ENCODE measurements at regions of chr11 and their contacts with region 1.

Region 1: DNA sequence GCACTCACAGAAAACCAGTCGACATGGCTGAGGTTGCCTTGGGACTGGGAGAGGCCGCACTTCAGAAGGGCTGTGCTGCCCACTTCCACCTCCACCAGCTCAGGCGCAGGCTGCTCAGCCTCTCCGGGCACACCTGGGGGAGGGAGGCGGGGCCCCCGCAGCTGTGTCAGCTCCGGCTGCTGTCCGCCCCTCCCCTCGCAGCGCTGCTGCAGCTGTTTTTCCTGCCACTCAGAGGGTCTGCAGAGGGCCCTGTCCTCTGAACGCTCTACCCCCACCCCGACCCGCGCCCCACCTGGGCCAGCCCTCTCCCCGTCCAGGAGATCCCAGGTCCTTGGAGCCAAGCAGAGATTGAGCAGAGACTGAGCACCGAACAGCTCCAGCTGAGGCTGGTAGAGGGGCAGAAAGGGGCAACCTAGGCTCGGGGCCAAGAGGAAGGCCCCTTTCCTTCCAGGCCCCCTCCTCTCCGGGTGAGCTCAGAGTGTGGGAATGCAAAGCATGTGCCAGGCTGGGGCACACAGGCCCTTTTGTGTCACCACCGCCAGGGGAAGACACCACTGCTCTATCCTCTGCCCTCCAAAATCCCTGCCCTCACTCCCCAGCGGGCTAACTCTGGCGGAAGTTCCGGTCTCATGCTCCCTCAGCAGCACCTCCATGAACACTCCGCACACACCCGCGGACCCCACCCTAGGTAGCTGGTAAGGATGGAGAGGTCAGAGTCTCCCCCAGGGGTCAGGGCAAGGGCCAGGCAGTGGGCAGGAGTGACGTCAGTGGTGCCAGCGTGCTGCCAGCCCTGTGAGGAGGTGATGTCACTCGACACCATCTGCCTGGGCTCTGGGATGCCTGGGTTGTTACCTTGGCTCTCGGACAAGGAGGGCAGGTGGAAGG is 1.6 kb downstream of the MCAM start:
- DNase-seq: peak in 1 of 2 donors; percentile 82
- H3K4me3 ChIP-seq: peak overlapping the region; percentile 80 to 92
- H3K27ac ChIP-seq: peak overlapping the region; percentile 98 to 99
- H3K4me1 ChIP-seq: peaks cover 20 to 60% of the 10 kb centered on the region in 2 donors
- H3K27me3 ChIP-seq: no peaks in the 10 kb centered on the region
- CTCF ChIP-seq: peak; percentile 11 to 24 (median 22)

Region 2: DNA sequence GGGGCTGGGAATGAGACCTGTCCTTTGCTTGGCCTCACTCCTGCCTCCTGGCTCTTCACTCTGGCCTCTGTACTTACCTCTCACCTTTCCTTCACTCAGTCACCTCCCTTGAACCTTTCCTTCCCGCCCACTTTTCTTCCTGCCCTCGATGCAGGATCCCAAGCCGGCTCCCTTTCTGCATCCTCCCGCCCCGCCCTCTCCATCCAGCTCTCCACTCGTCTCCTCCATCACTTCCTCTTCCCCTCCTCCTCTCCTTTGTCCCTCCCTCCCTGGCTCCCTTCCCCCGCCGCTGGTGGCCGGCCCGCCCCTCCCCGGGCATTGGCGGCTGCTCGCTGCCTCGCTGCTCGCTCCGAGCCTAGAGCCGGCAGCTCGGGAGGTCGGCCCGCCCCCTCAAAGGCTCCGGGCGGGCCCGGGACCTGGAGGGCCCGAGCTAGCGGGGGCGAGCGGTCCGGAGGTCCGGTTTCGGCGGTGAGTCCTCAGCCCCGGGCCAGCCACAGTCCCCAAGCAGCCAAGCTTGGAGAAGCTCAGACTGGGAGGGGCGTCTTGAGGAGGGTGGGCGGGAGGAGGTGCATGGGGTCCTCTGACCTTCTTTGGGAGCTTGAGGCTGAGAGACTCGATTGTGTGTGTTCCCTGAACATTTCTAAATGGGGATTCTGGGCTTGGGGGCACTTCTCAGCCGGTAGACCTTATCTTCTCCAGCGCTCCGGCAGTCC is 694.1 kb before region 1 on chr11:
- intact Hi-C with region 1: loop called (anchors 5 kb)
- DNase-seq: peak in 1 of 2 donors; percentile 95
- H3K4me3 ChIP-seq: peak overlapping the region; percentile 73
- H3K27ac ChIP-seq: peak overlapping the region; percentile 95 to 99
- H3K4me1 ChIP-seq: peaks cover 31 to 67% of the 10 kb centered on the region in 2 donors
- H3K27me3 ChIP-seq: no peaks in the 10 kb centered on the region
- CTCF ChIP-seq: no peak

Region 3: GRCh38 chr11:119101759-119102423 is 213.5 kb before region 1 on chr11 and contains the start of gene DPAGT1:
- intact Hi-C with region 1: loop called (anchors 5 kb)
- DNase-seq: peak; percentile 70 to 97
- H3K4me3 ChIP-seq: peak within 1 kb of the TSS; percentile 75 to 89
- H3K27ac ChIP-seq: peak within 1 kb of the TSS; percentile 92
- H3K4me1 ChIP-seq: peaks cover 20 to 25% of the 10 kb centered on the region in 2 donors
- H3K27me3 ChIP-seq: no peaks in the 10 kb centered on the region
- CTCF ChIP-seq: no peak
- total RNA-seq, gene DPAGT1: 61.9 TPM

Region 4: GRCh38 chr11:119295178-119295577 is 20.2 kb before region 1 on chr11:
- intact Hi-C with region 1: no loop called
- DNase-seq: no peak
- H3K4me3 ChIP-seq: no peak overlapping the region
- H3K27ac ChIP-seq: no peak overlapping the region
- H3K4me1 ChIP-seq: no peaks in the 10 kb centered on the region
- H3K27me3 ChIP-seq: no peaks in the 10 kb centered on the region
- CTCF ChIP-seq: no peak